Activated B cell treated with CpG ODN at 0.5 μM for 24 hours (primary cell): ENCODE measurements at regions of chr13 and their contacts with region 1.

Region 1: DNA sequence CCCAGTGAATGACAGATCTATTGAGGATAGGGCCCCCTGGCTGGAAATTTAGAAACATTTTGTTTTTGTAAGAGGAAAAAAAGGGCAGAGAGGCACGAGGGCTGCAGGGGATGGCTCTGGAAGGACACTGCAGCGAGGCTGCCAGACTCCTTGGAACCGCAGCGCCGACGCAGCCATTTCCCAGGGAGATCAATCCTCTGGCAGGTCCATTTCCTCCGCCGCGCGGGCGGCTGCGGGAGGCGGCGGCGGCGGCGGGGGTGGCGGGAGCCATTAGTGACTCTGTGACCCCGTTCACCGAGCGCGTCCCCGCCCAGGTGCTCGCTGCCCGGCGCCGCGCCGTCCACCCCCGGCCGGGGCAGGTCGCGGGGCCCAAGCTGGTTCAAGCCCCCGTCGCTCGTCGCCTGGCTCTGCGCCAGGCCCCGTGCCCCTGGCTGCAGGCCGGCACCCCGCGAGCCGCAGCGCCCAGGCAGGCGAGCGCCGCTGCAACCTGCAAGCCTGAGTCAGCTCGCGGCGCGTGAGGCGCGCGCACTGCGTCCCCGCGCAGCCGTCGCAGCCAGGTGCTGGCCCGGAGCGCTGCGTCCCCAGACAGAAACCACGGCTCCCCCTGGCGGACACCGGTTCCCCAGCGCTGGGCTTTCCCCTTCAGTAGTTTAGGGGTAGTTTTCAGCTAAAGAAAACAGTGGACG is 192.6 kb downstream of the KATNAL1 start:
- DNase-seq: peak; percentile 89
- ATAC-seq: peak; percentile 95
- H3K4me3 Mint-ChIP-seq: peak overlapping the region; percentile 81
- H3K27ac Mint-ChIP-seq: no peak overlapping the region
- H3K4me1 Mint-ChIP-seq: peaks cover 25% of the 10 kb centered on the region
- H3K27me3 Mint-ChIP-seq: peaks cover 15% of the 10 kb centered on the region
- CTCF ChIP-seq: no peak

Region 2: DNA sequence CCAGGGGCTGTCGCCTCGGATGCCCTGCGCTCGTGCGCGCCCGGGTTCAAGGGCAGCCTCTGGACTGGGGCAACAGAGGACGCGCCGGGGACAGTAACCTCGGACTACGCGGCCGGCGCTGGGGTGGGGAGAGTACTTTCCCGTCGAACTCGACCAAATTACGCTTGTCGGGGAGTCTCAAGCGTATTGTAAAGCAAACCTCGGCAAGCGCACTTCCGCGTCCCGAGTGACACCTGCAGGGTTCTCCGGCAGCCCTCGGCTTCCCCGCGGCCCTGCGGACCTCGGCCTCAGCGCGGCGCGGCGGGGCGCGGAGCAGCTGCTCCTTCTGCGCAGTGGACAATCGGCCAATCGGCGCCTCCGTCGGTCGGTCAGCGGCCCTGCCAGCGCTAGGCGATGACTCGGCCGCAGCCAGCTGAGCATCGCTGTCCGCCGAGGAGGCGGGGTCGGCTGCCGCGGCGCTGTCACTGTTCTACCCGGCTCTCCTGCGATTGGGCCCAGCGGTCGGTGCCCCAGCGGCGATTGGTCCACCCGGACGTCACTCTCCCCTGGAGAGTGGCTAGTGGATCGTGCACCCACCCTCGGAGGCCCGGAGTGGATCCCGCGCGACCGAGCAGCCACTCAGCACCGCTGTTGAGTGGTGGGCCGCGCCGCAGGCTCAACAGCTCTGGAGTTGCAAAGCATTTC is 1396.0 kb before region 1 on chr13 and contains the start of gene SLC46A3:
- CTCF ChIA-PET with region 1: no interaction called
- POLR2A ChIA-PET with region 1: no interaction called
- intact Hi-C with region 1: loop called (anchors 10 kb)
- DNase-seq: peak; percentile 95
- ATAC-seq: peak; percentile 98
- H3K4me3 Mint-ChIP-seq: peak within 1 kb of the TSS; percentile 92
- H3K27ac Mint-ChIP-seq: peak within 1 kb of the TSS; percentile 92
- H3K4me1 Mint-ChIP-seq: peaks cover 23% of the 10 kb centered on the region
- H3K27me3 Mint-ChIP-seq: no peaks in the 10 kb centered on the region
- CTCF ChIP-seq: no peak
- total RNA-seq, gene SLC46A3: 8.6 and 11.8 TPM in 2 replicates

Region 3: GRCh38 chr13:29595380-29596063 is 519.2 kb before region 1 on chr13 and contains the start of gene SLC7A1:
- CTCF ChIA-PET with region 1: interaction called, 4 read pairs
- POLR2A ChIA-PET with region 1: interaction called, 3 read pairs
- intact Hi-C with region 1: loop called (anchors 1 kb)
- DNase-seq: peak; percentile 82
- ATAC-seq: peak; percentile 87
- H3K4me3 Mint-ChIP-seq: peak within 1 kb of the TSS; percentile 91
- H3K27ac Mint-ChIP-seq: peak within 1 kb of the TSS; percentile 88
- H3K4me1 Mint-ChIP-seq: peaks cover 33% of the 10 kb centered on the region
- H3K27me3 Mint-ChIP-seq: peaks cover 1% of the 10 kb centered on the region
- CTCF ChIP-seq: no peak
- total RNA-seq, gene SLC7A1: 83.5 and 85.0 TPM in 2 replicates

Region 4: GRCh38 chr13:29850224-29850898 is 264.4 kb before region 1 on chr13 and contains the start of gene UBL3:
- CTCF ChIA-PET with region 1: interaction called, 6 read pairs
- POLR2A ChIA-PET with region 1: interaction called, 4 read pairs
- intact Hi-C with region 1: loop called (anchors 1 kb)
- DNase-seq: peak; percentile 84
- ATAC-seq: peak; percentile 90
- H3K4me3 Mint-ChIP-seq: peak within 1 kb of the TSS; percentile 96
- H3K27ac Mint-ChIP-seq: peak within 1 kb of the TSS; percentile 99
- H3K4me1 Mint-ChIP-seq: peaks cover 33% of the 10 kb centered on the region
- H3K27me3 Mint-ChIP-seq: no peaks in the 10 kb centered on the region
- CTCF ChIP-seq: no peak
- total RNA-seq, gene UBL3: 17.9 and 18.6 TPM in 2 replicates

Region 5: GRCh38 chr13:29969286-29969685 is 145.4 kb before region 1 on chr13:
- CTCF ChIA-PET with region 1: no interaction called
- POLR2A ChIA-PET with region 1: no interaction called
- intact Hi-C with region 1: no loop called
- DNase-seq: no peak
- ATAC-seq: no peak
- H3K4me3 Mint-ChIP-seq: no peak overlapping the region
- H3K27ac Mint-ChIP-seq: no peak overlapping the region
- H3K4me1 Mint-ChIP-seq: no peaks in the 10 kb centered on the region
- H3K27me3 Mint-ChIP-seq: peaks cover 8% of the 10 kb centered on the region
- CTCF ChIP-seq: no peak

Region 6: DNA sequence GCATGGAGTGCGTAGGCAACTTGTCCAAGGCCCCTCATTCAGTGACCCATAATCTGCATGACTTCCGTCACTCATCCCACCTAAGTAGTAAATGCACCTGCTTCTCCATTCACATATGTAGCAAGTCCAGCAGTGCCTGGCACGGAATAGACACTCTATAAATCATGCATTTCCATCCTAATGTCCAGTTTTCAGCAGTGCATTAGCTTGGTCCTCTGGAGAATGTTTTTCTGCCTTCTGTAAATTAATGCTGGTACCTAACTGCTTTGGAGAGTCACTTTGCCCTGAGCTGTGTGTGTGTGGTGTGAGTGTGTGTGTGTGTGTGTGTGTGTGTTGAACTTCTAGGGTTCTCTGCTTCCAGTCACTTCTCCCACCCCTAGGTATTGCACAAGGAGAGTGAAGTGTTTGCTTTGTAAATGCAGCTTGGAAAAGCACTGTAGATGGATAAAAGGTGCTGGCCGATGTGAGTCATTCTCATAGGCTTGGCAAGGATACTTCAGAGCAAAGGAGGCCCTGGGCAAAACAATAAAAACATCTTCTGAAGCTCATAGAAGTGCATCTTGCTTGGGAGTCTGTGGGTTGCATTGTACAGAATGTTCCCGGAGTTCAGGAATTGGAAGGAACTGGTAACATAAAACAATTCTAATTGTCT is 10.8 kb after region 1 on chr13:
- CTCF ChIA-PET with region 1: interaction called, 12 read pairs
- POLR2A ChIA-PET with region 1: interaction called, 3 read pairs
- intact Hi-C with region 1: no loop called
- DNase-seq: no peak
- ATAC-seq: no peak
- H3K4me3 Mint-ChIP-seq: no peak overlapping the region
- H3K27ac Mint-ChIP-seq: no peak overlapping the region
- H3K4me1 Mint-ChIP-seq: peaks cover 17% of the 10 kb centered on the region
- H3K27me3 Mint-ChIP-seq: no peaks in the 10 kb centered on the region
- CTCF ChIP-seq: no peak

Region 7: DNA sequence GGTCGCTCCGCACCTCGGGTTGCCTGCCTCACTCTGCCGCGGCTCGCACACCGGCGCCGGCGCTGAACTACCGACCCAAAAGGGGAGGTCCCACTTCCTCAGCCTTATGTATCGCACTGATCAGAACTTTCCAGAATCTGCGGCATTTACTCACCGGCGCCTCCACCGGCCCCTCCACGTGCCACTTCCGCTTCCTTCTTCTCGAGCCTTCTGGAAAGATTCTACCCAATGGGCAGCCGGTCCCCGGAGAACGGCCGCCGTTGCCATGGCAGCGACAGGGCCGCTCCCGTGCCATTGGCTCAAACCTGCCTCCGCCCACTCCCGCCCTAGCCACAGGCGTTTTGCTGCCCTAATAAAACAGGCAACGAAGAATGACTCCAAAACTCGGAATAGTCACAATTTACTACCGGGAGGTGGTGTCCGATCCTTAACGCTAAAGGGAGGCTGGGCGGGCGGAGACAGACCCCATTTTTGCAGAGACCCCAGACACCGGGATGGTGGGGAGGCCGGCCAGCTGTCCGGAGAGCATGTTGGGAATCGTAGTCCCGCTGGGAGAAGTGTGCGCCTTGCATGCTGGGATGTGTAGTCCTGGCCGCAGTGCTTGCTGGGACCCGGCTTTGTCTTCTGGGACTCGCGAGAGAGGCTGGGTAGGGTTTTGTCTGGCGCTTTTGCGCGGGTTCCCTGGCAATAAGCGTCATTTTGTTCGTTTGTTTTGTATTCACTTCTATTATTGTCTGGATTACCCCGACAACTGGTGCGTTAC is 1047.3 kb after region 1 on chr13 and contains the start of gene HSPH1:
- CTCF ChIA-PET with region 1: no interaction called
- POLR2A ChIA-PET with region 1: no interaction called
- intact Hi-C with region 1: loop called (anchors 5 kb)
- DNase-seq: peak; percentile 99
- ATAC-seq: peak; percentile 85
- H3K4me3 Mint-ChIP-seq: peak within 1 kb of the TSS; percentile 97
- H3K27ac Mint-ChIP-seq: peak within 1 kb of the TSS; percentile 95
- H3K4me1 Mint-ChIP-seq: peaks cover 36% of the 10 kb centered on the region
- H3K27me3 Mint-ChIP-seq: no peaks in the 10 kb centered on the region
- CTCF ChIP-seq: no peak
- total RNA-seq, gene HSPH1: 107 and 112 TPM in 2 replicates